AG04449 (cell line): ENCODE measurements at regions of chr14 and their contacts with region 1.

Region 1: GRCh38 chr14:96204151-96205058 is at the start of gene BDKRB2:
- DNase-seq: peak; percentile 31
- H3K4me3 ChIP-seq: peak within 1 kb of the TSS; percentile 71
- CTCF ChIP-seq: no peak

Region 2: GRCh38 chr14:96189281-96189711 is 15.1 kb before region 1 on chr14:
- CTCF ChIA-PET with region 1: no interaction called
- POLR2A ChIA-PET with region 1: no interaction called
- DNase-seq: peak; percentile 83
- H3K4me3 ChIP-seq: no peak overlapping the region
- CTCF ChIP-seq: no peak

Region 3: GRCh38 chr14:96215452-96216244 is 11.2 kb after region 1 on chr14:
- CTCF ChIA-PET with region 1: interaction called, 11 read pairs
- POLR2A ChIA-PET with region 1: no interaction called
- DNase-seq: no peak
- H3K4me3 ChIP-seq: no peak overlapping the region
- CTCF ChIP-seq: no peak